MCF 10A (cell line): ENCODE measurements at regions of chr18 and their contacts with region 1.

Region 1: GRCh38 chr18:8478166-8478967 is 130.9 kb upstream of the RAB12 start:
- DNase-seq: peak; percentile 64
- H3K4me3 Mint-ChIP-seq: no peak overlapping the region
- H3K27ac Mint-ChIP-seq: no peak overlapping the region
- H3K4me1 Mint-ChIP-seq: peaks cover 5% of the 10 kb centered on the region
- H3K27me3 Mint-ChIP-seq: peaks cover 45% of the 10 kb centered on the region
- CTCF ChIP-seq: peak; percentile 76

Region 2: GRCh38 chr18:7221424-7222155 is 1256.8 kb before region 1 on chr18:
- CTCF ChIA-PET with region 1: interaction called, 7 read pairs
- POLR2A ChIA-PET with region 1: no interaction called
- intact Hi-C with region 1: loop called (anchors 1 kb)
- DNase-seq: peak; percentile 80
- H3K4me3 Mint-ChIP-seq: no peak overlapping the region
- H3K27ac Mint-ChIP-seq: no peak overlapping the region
- H3K4me1 Mint-ChIP-seq: no peaks in the 10 kb centered on the region
- H3K27me3 Mint-ChIP-seq: peaks cover 25% of the 10 kb centered on the region
- CTCF ChIP-seq: peak; percentile 83

Region 3: GRCh38 chr18:8461544-8461943 is 16.8 kb before region 1 on chr18:
- CTCF ChIA-PET with region 1: interaction called, 14 read pairs
- POLR2A ChIA-PET with region 1: no interaction called
- intact Hi-C with region 1: no loop called
- DNase-seq: no peak
- H3K4me3 Mint-ChIP-seq: no peak overlapping the region
- H3K27ac Mint-ChIP-seq: no peak overlapping the region
- H3K4me1 Mint-ChIP-seq: no peaks in the 10 kb centered on the region
- H3K27me3 Mint-ChIP-seq: no peaks in the 10 kb centered on the region
- CTCF ChIP-seq: no peak

Region 4: DNA sequence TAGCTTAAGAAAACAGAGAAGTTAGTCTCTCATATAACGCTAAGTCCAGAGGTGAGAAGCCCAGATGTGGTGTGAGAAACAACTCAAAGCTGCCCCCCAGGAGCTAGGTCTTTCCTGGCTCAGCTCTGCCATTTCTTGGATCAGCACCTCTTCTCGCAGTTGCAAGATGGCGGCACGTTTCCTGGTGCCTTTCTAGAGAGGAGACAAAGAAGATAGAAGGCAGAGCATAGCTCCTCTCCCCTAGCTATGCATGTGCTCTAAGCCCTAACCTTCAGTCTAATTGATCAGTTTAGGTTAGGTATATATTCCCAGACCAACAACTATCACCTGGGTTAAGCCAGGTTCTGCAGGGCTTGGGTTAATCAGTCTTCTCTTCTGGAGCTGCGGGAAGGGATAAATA is 11.4 kb after region 1 on chr18:
- CTCF ChIA-PET with region 1: interaction called, 10 read pairs
- POLR2A ChIA-PET with region 1: no interaction called
- intact Hi-C with region 1: no loop called
- DNase-seq: no peak
- H3K4me3 Mint-ChIP-seq: no peak overlapping the region
- H3K27ac Mint-ChIP-seq: no peak overlapping the region
- H3K4me1 Mint-ChIP-seq: no peaks in the 10 kb centered on the region
- H3K27me3 Mint-ChIP-seq: peaks cover 41% of the 10 kb centered on the region
- CTCF ChIP-seq: no peak